BJ (cell line): ENCODE measurements at regions of chr1 and their contacts with region 1.

Region 1: GRCh38 chr1:91314643-91315042 is 90.0 kb downstream of the HFM1 start:
- DNase-seq: no peak
- H3K4me3 ChIP-seq: no peak overlapping the region
- H3K27me3 ChIP-seq: no peaks in the 10 kb centered on the region
- CTCF ChIP-seq: no peak

Region 2: GRCh38 chr1:91345395-91346005 is 30.9 kb after region 1 on chr1:
- CTCF ChIA-PET with region 1: no interaction called
- POLR2A ChIA-PET with region 1: interaction called, 10 read pairs
- DNase-seq: no peak
- H3K4me3 ChIP-seq: no peak overlapping the region
- H3K27me3 ChIP-seq: no peaks in the 10 kb centered on the region
- CTCF ChIP-seq: no peak